Spleen (tissue), 13 donors: ENCODE measurements at regions of chr14 and their contacts with region 1.

Region 1: DNA sequence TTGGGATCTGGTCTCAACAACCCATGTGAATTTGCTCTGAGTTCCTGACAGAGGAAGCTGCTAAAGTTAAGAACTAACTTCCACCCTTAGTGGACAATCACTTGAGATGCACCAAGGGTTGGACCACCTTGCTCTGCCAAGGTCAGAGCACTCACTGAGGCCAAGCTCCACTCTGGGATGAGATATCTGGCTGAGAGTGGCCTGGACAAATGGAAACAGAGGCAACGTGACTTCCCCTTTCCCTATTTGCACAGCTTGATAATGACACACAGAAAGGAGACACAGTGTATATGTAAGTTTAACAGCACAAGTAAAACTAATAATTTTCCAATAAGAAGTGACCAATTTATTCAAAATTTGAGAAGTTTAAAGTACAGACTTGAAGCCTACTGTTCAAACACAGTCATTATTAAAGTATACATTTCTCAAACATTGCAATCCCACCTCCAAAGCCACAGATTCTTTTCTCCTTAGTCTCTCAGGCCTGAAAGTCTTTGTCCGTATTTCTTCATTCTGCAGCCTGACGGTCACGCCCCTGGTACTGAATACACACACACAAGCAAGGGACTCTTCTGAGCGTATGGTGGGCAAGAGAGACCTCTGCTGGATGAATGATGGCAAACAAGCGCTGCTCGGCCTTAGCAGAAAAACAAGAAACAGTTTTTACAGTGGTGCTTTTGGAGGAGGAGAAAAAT is 28.6 kb downstream of the TMEM30B start:
- DNase-seq: no peak
- H3K4me3 ChIP-seq: no peak overlapping the region
- H3K27ac ChIP-seq: no peak overlapping the region
- H3K4me1 ChIP-seq: peaks cover 0 to 14% (median 8%) of the 10 kb centered on the region in 6 donors
- H3K27me3 ChIP-seq: no peaks in the 10 kb centered on the region
- CTCF ChIP-seq: peak in 10 of 11 experiments; percentile 57 to 86 (median 76)
- POLR2A ChIP-seq: no peak

Region 2: DNA sequence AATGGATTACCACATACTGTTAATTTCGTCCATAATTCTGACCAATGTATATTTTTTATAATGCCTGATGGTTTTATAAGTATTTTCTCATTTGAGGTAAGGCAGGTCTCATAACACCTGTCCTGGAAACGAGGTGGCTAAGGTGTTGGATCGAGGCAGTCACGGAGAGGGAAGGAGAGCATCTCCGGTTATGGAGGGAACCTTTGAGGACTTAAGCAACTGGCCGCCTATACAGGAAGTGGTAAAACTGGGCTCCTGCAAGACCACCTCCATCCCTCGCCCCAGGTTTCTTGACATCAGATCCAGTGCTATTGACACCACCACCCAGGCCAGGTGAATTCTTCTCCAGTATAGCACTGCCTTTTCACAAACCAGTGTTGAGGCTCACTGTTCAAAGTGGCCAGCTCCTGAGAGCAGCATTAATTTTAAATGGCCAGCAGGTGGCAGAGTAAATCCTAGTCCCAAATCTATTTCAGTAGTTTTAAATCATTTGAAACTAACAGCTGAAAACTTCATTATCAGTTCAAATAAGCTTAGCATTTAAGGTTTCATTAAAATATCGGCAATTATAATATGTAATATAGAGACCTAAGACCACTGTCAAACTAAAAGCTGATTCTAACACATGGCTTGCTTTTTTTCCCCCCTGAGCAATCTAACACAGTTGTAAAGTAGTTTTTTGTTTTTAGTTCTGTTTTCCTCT is 902.7 kb before region 1 on chr14:
- intact Hi-C with region 1: loop called (anchors 10 kb)
- DNase-seq: no peak
- H3K4me3 ChIP-seq: no peak overlapping the region
- H3K27ac ChIP-seq: no peak overlapping the region
- H3K4me1 ChIP-seq: peaks cover 0 to 5% (median 0%) of the 10 kb centered on the region in 6 donors
- H3K27me3 ChIP-seq: peaks cover 0 to 12% (median 0%) of the 10 kb centered on the region in 7 donors
- CTCF ChIP-seq: peak in 9 of 11 experiments; percentile 36 to 75 (median 65)
- POLR2A ChIP-seq: no peak

Region 3: GRCh38 chr14:60628892-60629291 is 623.6 kb before region 1 on chr14:
- intact Hi-C with region 1: loop called (anchors 5 kb)
- DNase-seq: no peak
- H3K4me3 ChIP-seq: no peak overlapping the region
- H3K27ac ChIP-seq: no peak overlapping the region
- H3K4me1 ChIP-seq: no peaks in the 10 kb centered on the region
- H3K27me3 ChIP-seq: peaks cover 0 to 34% (median 0%) of the 10 kb centered on the region in 7 donors
- CTCF ChIP-seq: no peak
- POLR2A ChIP-seq: no peak

Region 4: GRCh38 chr14:60859525-60859924 is 393.0 kb before region 1 on chr14:
- intact Hi-C with region 1: no loop called
- DNase-seq: no peak
- H3K4me3 ChIP-seq: no peak overlapping the region
- H3K27ac ChIP-seq: no peak overlapping the region
- H3K4me1 ChIP-seq: peaks cover 0 to 4% (median 0%) of the 10 kb centered on the region in 6 donors
- H3K27me3 ChIP-seq: no peaks in the 10 kb centered on the region
- CTCF ChIP-seq: no peak
- POLR2A ChIP-seq: no peak

Region 5: DNA sequence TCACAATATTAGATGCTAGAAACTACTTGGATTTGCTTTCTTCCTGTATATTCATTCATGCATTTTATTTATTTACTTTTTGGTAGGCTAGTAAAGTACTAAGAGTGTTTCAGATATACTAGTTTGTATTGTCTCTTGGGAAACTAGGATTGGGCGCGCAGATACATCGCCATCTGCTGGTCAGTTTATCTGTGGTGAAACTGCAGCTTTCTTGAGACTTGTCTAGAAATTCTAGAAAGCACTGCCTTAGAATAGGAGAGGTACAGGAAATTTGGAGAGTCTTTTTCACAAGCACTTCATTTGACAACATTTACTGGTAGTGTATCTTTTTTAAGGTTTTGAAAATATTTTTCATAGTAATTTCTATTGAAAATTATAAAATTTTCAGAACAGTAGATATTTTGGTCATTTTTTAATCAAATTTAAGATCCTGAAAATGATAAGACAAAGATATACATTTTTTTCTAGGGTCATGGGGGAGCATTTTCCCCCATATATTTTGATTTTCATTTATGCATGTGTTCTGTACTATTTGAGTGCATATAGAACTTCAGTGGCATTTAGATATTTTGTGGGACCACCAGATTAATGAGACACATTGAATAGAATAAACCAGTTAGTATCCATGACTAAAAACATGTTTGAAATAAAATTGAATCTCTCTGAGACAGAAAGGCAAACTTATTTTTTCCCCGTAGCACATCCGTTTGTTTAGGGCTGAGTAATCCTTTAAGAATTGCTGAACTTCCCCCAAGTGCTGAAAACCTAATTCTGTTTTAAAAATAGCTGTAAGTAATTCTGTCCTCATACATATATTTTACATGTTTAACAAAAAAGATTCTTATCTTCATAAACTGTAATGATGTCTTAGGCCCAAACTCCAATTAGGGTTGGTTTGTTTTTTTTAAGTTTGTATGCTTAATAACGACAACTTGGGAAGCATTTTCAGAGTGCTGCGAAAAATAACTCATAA is 227.0 kb before region 1 on chr14:
- intact Hi-C with region 1: loop called (anchors 10 kb)
- DNase-seq: peak; percentile 70
- H3K4me3 ChIP-seq: no peak overlapping the region
- H3K27ac ChIP-seq: no peak overlapping the region
- H3K4me1 ChIP-seq: no peaks in the 10 kb centered on the region
- H3K27me3 ChIP-seq: no peaks in the 10 kb centered on the region
- CTCF ChIP-seq: peak in 10 of 11 experiments; percentile 43 to 87 (median 76)
- POLR2A ChIP-seq: no peak